IMR-90 (cell line): ENCODE measurements at regions of chr22 and their contacts with region 1.

Region 1: GRCh38 chr22:28600546-28601143 is 79.0 kb downstream of the TTC28 start:
- DNase-seq: peak; percentile 72
- ATAC-seq: peak; percentile 51; the same call in 1 of the 2 replicates
- H3K4me3 ChIP-seq: no peak overlapping the region
- H3K27ac ChIP-seq: no peak overlapping the region
- H3K4me1 ChIP-seq: peaks cover 6% of the 10 kb centered on the region; the same call in 1 of the 2 replicates
- H3K27me3 ChIP-seq: no peaks in the 10 kb centered on the region
- CTCF ChIP-seq: peak; percentile 65
- POLR2A ChIP-seq: no peak
- RAD21 ChIP-seq: peak; percentile 80

Region 2: GRCh38 chr22:28800308-28801077 is 199.8 kb after region 1 on chr22 and contains the start of gene XBP1:
- CTCF ChIA-PET with region 1: no interaction called
- POLR2A ChIA-PET with region 1: no interaction called
- dilution Hi-C with region 1: no loop called
- in situ Hi-C with region 1: no loop called
- intact Hi-C with region 1: loop called (anchors 10 kb)
- DNase-seq: peak; percentile 93
- ATAC-seq: peak; percentile 97
- H3K4me3 ChIP-seq: peak within 1 kb of the TSS; percentile 91
- H3K27ac ChIP-seq: peak within 1 kb of the TSS; percentile 87
- H3K4me1 ChIP-seq: no peaks in the 10 kb centered on the region
- H3K27me3 ChIP-seq: no peaks in the 10 kb centered on the region
- CTCF ChIP-seq: no peak
- POLR2A ChIP-seq: peak; percentile 98
- RAD21 ChIP-seq: no peak
- total RNA-seq, gene XBP1: 195 and 223 TPM in 2 replicates

Region 3: DNA sequence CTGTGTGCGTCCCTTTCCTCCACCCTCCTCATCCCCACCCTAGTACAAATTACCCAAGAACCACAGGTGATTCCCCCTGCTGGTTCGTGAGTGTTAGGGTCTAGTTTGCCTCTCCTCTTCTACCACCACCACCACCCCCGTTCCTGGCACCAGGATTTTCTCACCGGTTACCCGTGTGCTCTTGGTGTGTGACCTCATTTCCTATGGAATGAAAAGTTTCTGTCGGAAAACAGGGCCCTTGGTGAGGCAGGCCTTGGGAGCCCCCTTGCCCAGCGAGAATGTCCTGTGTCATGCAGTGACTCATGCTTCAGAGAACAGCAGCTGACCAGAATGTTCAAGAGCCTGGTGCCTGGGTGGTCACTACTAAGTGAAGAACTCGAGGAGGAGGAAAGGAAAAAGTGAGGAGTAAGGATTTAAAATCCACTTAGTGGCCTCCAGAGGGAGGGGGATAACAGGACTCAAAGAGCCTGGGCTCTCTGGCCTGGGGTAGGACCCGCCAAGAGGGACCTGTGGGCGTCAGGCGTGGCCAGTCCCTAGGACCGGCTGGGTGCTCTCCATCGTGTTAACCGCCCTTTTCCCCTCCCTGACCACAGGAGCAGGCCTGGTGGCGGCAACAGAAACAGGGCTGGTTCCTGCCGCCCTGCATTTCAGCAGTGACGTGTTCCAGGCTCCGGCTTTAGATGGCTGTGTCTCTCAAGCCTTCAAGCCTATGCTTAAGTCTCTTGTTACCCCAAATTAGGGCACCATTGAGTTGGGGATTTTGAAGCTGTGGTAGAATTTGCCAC is 430.8 kb after region 1 on chr22:
- CTCF ChIA-PET with region 1: no interaction called
- POLR2A ChIA-PET with region 1: no interaction called
- dilution Hi-C with region 1: no loop called
- in situ Hi-C with region 1: loop called (anchors 10 kb)
- intact Hi-C with region 1: no loop called
- DNase-seq: peak; percentile 98
- ATAC-seq: peak; percentile 83
- H3K4me3 ChIP-seq: peak overlapping the region; percentile 10; the same call in 1 of the 2 replicates
- H3K27ac ChIP-seq: peak overlapping the region; percentile 87
- H3K4me1 ChIP-seq: peaks cover 18% of the 10 kb centered on the region
- H3K27me3 ChIP-seq: no peaks in the 10 kb centered on the region
- CTCF ChIP-seq: peak; percentile 13; the same call in 1 of the 2 replicates
- POLR2A ChIP-seq: peak; percentile 74; the same call in 1 of the 2 replicates
- RAD21 ChIP-seq: peak; percentile 26; the same call in 1 of the 2 replicates

Region 4: GRCh38 chr22:29154364-29155048 is 553.9 kb after region 1 on chr22:
- CTCF ChIA-PET with region 1: no interaction called
- POLR2A ChIA-PET with region 1: no interaction called
- dilution Hi-C with region 1: no loop called
- in situ Hi-C with region 1: no loop called
- intact Hi-C with region 1: loop called (anchors 10 kb)
- DNase-seq: peak; percentile 51
- ATAC-seq: peak; percentile 95
- H3K4me3 ChIP-seq: no peak overlapping the region
- H3K27ac ChIP-seq: no peak overlapping the region
- H3K4me1 ChIP-seq: no peaks in the 10 kb centered on the region; the same call in 1 of the 2 replicates
- H3K27me3 ChIP-seq: peaks cover under 1% of the 10 kb centered on the region
- CTCF ChIP-seq: peak; percentile 91
- POLR2A ChIP-seq: no peak
- RAD21 ChIP-seq: peak; percentile 83

Region 5: GRCh38 chr22:29253561-29254285 is 653.1 kb after region 1 on chr22:
- CTCF ChIA-PET with region 1: no interaction called
- POLR2A ChIA-PET with region 1: no interaction called
- dilution Hi-C with region 1: no loop called
- in situ Hi-C with region 1: loop called (anchors 25 kb)
- intact Hi-C with region 1: loop called (anchors 2 kb)
- DNase-seq: no peak
- ATAC-seq: no peak
- H3K4me3 ChIP-seq: no peak overlapping the region
- H3K27ac ChIP-seq: no peak overlapping the region
- H3K4me1 ChIP-seq: no peaks in the 10 kb centered on the region
- H3K27me3 ChIP-seq: no peaks in the 10 kb centered on the region; the same call in 1 of the 2 replicates
- CTCF ChIP-seq: no peak
- POLR2A ChIP-seq: no peak
- RAD21 ChIP-seq: no peak